Breast epithelium (tissue), 4 donors: ENCODE measurements at regions of chr9 and their contacts with region 1.

Region 1: DNA sequence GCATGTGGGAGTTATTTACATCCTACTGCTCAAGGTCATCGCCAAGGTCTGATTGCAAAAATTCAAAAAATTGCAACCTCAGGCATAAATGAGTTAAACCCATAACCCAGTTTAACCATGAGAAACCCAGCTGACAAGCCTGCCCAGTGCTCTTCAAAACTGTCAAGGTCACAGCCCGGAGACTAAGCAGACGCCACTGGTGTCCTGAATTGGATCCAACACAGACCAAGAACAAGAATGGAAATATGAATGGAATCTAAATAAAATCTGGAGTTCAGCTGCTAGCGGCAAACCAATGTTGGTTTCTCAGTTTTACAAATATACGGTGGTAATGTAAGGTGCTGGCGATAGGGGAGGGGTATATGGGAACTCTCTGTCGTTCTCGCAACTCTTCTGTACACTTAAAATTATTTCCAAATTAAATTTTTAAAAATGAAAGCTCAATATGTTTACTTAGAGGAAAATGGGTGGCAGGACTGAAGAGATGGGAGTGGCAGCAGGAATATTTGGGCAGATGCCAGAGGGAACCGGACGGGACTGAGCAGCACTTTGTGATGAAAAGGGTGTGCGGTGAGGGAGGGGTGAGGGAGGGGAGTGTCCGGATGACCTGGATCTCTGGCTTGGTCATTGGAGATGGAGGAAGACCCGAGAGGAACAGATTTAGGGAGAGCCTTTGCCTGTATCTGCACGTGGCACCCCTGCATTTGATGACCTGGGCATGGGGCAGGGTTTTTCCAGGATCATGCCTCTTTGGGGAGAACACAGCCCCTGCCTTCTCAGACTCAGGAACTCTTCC is 201.3 kb upstream of the MVB12B start:
- DNase-seq: peak in 1 of 2 donors; percentile 6
- H3K4me3 ChIP-seq: no peak overlapping the region
- H3K27ac ChIP-seq: no peak overlapping the region
- H3K4me1 ChIP-seq: no peaks in the 10 kb centered on the region
- H3K27me3 ChIP-seq: peaks cover 0 to 27% of the 10 kb centered on the region in 2 donors
- CTCF ChIP-seq: no peak
- POLR2A ChIP-seq: no peak

Region 2: DNA sequence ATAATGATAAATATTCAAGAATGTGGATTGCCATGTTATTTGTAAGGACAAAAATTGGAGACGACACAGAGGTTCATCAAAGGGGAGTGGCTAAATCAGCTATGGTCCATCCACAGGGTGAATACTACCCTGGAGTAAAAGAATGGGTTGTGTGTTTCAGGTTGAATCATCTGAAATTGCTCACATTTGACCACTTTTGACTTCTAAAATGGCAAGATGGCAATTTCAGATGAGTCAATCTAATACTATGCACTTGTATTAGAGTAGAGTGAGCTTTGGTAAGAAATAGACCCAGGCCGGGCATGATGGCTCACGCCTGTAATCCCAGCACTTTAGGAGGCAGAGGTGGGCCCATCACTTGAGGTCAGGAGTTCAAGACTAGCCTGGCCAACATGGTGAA is 731.9 kb before region 1 on chr9:
- intact Hi-C with region 1: no loop called
- DNase-seq: no peak
- H3K4me3 ChIP-seq: no peak overlapping the region
- H3K27ac ChIP-seq: no peak overlapping the region
- H3K4me1 ChIP-seq: no peaks in the 10 kb centered on the region
- H3K27me3 ChIP-seq: no peaks in the 10 kb centered on the region
- CTCF ChIP-seq: no peak
- POLR2A ChIP-seq: no peak

Region 3: DNA sequence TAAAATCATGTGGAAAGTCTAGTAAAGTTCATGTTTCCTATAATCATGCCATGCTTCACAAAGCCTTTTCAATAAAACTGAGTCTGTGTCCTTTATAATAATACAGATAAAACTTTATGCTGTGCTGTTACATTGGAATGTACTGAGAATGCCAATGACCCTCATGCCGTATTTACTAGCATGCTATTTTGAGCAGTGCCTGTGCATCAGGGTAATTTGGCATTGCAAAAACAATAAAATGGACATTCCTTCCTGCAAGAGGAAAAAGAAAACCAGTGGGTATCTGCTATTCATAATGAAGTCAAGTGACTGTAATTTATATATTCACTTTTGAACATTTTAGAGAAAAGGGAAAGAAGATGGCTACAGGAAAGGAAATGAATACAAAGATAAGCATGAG is 219.2 kb before region 1 on chr9:
- intact Hi-C with region 1: loop called (anchors 5 kb)
- DNase-seq: no peak
- H3K4me3 ChIP-seq: no peak overlapping the region
- H3K27ac ChIP-seq: no peak overlapping the region
- H3K4me1 ChIP-seq: no peaks in the 10 kb centered on the region
- H3K27me3 ChIP-seq: no peaks in the 10 kb centered on the region
- CTCF ChIP-seq: no peak
- POLR2A ChIP-seq: no peak

Region 4: GRCh38 chr9:126093771-126094170 is 31.6 kb before region 1 on chr9:
- intact Hi-C with region 1: loop called (anchors 1 kb)
- DNase-seq: no peak
- H3K4me3 ChIP-seq: no peak overlapping the region
- H3K27ac ChIP-seq: no peak overlapping the region
- H3K4me1 ChIP-seq: no peaks in the 10 kb centered on the region
- H3K27me3 ChIP-seq: no peaks in the 10 kb centered on the region
- CTCF ChIP-seq: no peak
- POLR2A ChIP-seq: no peak

Region 5: DNA sequence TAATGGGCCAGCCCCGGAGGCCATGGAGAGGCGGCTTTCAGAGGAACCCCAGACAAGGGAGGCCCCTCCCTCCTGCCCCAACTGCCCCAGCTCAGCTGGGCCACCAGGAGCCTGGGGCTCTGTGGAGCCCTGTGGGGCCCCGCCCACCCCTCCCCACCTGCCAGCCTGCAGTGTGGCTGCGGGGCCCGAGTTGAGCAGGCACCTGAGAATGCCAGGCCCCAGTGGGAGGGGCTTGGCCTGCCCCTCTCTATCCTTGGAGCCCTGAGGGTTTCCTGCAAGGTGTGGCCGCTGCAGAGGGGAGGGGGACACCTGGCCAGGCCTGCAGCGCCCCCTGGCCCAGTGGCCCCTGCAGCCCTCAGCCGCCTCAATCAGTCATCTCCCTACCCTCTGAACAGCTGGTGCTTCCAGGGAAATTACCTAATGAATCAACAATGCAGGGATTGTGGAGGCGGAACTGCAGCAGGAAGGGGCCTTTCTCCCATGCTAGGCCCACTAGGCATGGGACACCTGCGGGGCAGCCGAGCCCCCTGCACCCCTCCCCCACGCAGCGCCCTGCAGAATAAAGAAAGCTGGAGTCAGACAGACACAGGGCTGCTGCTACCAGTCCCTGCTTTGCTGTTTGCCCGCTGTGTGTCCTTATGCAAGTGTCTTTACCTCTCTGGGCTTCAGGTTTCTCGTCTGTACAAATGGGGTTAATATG is 536.3 kb after region 1 on chr9:
- intact Hi-C with region 1: no loop called
- DNase-seq: peak in 1 of 2 donors; percentile 36
- H3K4me3 ChIP-seq: no peak overlapping the region
- H3K27ac ChIP-seq: peak overlapping the region; percentile 83 to 89
- H3K4me1 ChIP-seq: peaks cover 12 to 17% of the 10 kb centered on the region in 2 donors
- H3K27me3 ChIP-seq: no peaks in the 10 kb centered on the region
- CTCF ChIP-seq: no peak
- POLR2A ChIP-seq: no peak